Activated CD4-positive, alpha-beta memory T cell treated with anti-CD3 and anti-CD28 coated beads, Interleukin-2, amount 10 ng/mL, durations not matched to agents 7 days and 5 days (primary cell): ENCODE measurements at regions of chr11 and their contacts with region 1.

Region 1: GRCh38 chr11:72683782-72684200 is 9.6 kb upstream of the PDE2A start:
- DNase-seq: peak; percentile 70
- H3K4me3 Mint-ChIP-seq: no peak overlapping the region
- H3K27ac Mint-ChIP-seq: no peak overlapping the region
- H3K4me1 Mint-ChIP-seq: peaks cover 42% of the 10 kb centered on the region
- H3K27me3 Mint-ChIP-seq: peaks cover 6% of the 10 kb centered on the region

Region 2: DNA sequence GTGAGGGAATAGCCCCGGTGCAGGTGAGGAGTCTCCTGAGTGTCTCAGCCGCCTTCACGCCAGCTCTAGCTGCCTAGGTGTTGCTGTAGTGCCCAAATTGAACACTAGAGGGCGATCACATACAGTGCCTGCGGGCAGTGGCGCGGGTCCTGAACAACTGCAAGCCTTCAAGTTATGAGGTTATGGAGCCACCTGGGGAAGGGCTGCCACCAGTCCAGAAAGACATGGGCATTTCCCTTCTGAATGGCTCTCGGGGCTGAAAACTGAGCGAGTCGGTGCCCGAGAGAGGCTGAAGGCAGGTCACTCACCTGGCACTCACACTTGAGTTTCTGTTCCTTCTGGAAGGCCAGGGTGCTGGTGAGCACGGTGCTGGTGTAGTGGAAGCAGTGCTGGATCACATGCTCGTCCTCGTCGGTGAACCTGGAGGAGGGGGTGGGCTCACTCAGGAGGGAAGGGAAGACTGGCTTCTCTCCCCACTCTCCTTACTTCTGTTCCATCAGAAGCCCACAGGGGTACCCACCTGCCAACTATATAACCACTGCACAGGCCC is 98.0 kb before region 1 on chr11:
- CTCF ChIA-PET with region 1: interaction called, 42 read pairs
- POLR2A ChIA-PET with region 1: no interaction called
- DNase-seq: peak; percentile 75
- H3K4me3 Mint-ChIP-seq: peak overlapping the region; percentile 77
- H3K27ac Mint-ChIP-seq: no peak overlapping the region
- H3K4me1 Mint-ChIP-seq: peaks cover 45% of the 10 kb centered on the region
- H3K27me3 Mint-ChIP-seq: peaks cover 43% of the 10 kb centered on the region

Region 3: GRCh38 chr11:72609045-72609444 is 74.7 kb before region 1 on chr11:
- CTCF ChIA-PET with region 1: interaction called, 10 read pairs
- POLR2A ChIA-PET with region 1: no interaction called
- DNase-seq: peak; percentile 30
- H3K4me3 Mint-ChIP-seq: no peak overlapping the region
- H3K27ac Mint-ChIP-seq: no peak overlapping the region
- H3K4me1 Mint-ChIP-seq: peaks cover 30% of the 10 kb centered on the region
- H3K27me3 Mint-ChIP-seq: peaks cover 55% of the 10 kb centered on the region

Region 4: DNA sequence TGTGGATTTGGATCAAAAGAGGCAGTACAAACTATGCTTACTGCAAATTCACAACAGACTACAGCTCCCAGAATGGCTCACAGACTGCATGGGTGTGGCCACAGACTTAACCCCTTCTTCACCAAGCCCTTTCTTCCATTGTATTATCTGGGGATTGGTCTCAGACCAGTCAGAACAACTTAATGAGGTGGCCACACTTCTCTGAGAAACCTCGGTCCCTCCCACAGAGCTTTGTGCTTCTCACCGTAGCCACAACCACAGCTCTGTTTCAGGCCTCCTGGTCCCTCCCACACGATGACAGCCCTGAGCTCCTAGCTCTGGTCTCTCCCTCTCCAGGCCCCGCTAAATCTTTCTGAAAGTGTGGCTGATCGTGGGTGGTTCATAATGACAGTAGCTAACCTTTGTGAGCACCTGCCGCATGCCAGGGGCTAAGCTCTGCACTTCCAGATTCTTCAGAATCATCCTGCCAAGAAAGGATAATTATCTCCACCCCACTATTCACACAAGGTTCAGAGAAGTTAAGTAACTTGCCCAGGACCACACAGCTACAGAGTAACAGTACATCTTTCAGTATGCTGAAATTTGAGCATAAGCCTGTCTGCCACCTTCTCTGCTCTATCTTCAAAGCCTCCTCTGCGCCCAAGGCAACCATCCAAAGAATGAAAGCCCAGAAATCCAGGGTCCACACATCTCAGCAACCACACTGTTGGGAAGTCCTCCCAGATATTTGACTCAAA is 15.0 kb before region 1 on chr11:
- CTCF ChIA-PET with region 1: interaction called, 30 read pairs
- POLR2A ChIA-PET with region 1: interaction called, 6 read pairs
- DNase-seq: peak; percentile 72
- H3K4me3 Mint-ChIP-seq: no peak overlapping the region
- H3K27ac Mint-ChIP-seq: no peak overlapping the region
- H3K4me1 Mint-ChIP-seq: peaks cover 12% of the 10 kb centered on the region
- H3K27me3 Mint-ChIP-seq: peaks cover 34% of the 10 kb centered on the region

Region 5: GRCh38 chr11:72758690-72759389 is 75.0 kb after region 1 on chr11:
- CTCF ChIA-PET with region 1: no interaction called
- POLR2A ChIA-PET with region 1: no interaction called
- DNase-seq: no peak
- H3K4me3 Mint-ChIP-seq: no peak overlapping the region
- H3K27ac Mint-ChIP-seq: no peak overlapping the region
- H3K4me1 Mint-ChIP-seq: peaks cover 28% of the 10 kb centered on the region
- H3K27me3 Mint-ChIP-seq: no peaks in the 10 kb centered on the region

Region 6: DNA sequence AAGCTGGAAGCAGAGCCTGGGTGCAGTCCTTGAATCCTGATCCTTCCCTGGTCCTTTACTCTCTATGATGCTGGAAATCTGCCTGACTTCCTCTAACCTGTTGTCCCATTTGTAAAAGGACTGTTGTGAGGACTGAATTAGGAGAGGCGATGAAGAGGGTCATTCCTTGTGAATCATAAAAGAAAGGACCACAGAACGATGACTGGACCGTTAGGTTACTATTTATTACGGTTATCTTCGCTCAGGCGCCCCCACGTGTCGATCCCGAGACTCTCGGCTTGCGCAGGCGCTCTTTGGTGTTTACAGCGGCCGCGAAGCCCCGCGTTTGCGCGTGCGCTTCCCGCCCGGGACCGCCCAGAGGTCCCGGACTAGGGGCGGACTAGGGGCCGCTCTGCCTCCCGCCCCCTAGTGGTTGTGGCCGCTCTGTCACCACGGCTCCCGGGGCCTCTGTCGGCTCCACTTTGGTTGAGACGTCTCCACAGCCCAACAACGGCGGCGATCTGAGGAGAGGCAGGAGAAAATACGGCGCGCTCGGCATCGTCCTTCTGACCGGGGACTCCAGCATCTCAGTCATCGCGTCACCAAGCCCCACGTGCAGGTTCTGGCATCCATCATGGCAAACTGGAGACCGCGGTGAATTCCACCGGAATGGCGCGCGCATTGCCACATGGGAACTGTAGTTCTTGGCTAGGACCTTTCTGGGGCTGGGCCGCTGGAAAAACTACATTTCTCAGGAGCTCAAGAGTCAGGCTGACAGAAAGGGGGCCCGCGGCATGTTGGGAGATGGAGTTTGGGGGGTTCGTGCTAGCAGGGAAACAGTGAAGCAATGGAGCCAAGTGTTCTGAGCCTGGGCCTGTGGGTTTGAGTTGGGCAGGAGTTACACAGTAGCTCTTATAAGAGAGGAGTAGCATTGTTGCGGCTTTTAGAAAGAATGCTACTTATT is 109.9 kb after region 1 on chr11 and contains the start of gene STARD10:
- CTCF ChIA-PET with region 1: interaction called, 11 read pairs
- POLR2A ChIA-PET with region 1: no interaction called
- DNase-seq: peak; percentile 95
- H3K4me3 Mint-ChIP-seq: peak within 1 kb of the TSS; percentile 93
- H3K27ac Mint-ChIP-seq: peak within 1 kb of the TSS; percentile 96
- H3K4me1 Mint-ChIP-seq: peaks cover 23% of the 10 kb centered on the region
- H3K27me3 Mint-ChIP-seq: no peaks in the 10 kb centered on the region
- total RNA-seq, gene STARD10: 11.3 to 11.6 TPM